ENCODE measurements at regions of chr15 and their contacts with region 1.

Region 1: GRCh38 chr15:69172828-69173227 is 12.4 kb downstream of the GLCE start:
- DNase-seq: no peak
- CTCF ChIP-seq: no peak

Region 2: GRCh38 chr15:69160141-69160993 is 12.5 kb before region 1 on chr15 and contains the start of gene GLCE:
- CTCF ChIA-PET with region 1: interaction called, 10 read pairs
- POLR2A ChIA-PET with region 1: no interaction called
- DNase-seq: peak; percentile 99
- CTCF ChIP-seq: no peak

Region 3: DNA sequence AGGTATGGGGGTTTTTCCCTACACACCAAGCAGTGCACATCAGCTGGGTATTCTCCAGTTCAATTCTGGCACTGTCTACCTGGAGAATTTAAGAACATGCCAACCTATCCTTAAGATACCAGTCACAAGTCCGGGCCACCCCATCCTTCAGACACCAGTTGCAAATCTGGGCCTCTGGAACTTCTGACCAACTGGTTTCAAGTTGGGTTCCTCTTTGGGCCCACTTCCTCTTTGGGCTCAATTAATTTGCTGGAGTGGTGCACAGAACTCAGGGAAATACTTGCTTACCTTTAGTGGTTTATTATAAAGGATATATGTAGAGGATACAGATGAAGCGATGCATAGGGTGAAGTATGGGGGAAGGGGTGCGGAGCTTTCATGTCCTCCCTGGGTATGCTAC is 12.9 kb after region 1 on chr15:
- CTCF ChIA-PET with region 1: no interaction called
- POLR2A ChIA-PET with region 1: no interaction called
- DNase-seq: no peak
- CTCF ChIP-seq: no peak

Measured in GM10248 (cell line).